ENCODE measurements at regions of chr12 and their contacts with region 1.

Region 1: GRCh38 chr12:22544038-22544979 is at the start of gene C2CD5:
- DNase-seq: peak; percentile 91
- ATAC-seq: peak; percentile 88
- H3K4me3 ChIP-seq: peak within 1 kb of the TSS; percentile 88
- H3K27ac ChIP-seq: peak within 1 kb of the TSS; percentile 80
- H3K4me1 ChIP-seq: peaks cover 9% of the 10 kb centered on the region; the same call in 1 of the 2 replicates
- H3K27me3 ChIP-seq: no peaks in the 10 kb centered on the region
- CTCF ChIP-seq: 0 out of 2 replicates have a peak, but pooled peaks have one; percentile 17
- total RNA-seq, gene C2CD5: 12.7 and 14.4 TPM in 2 replicates

Region 2: GRCh38 chr12:21710948-21711775 is 833.1 kb before region 1 on chr12:
- CTCF ChIA-PET with region 1: no interaction called
- POLR2A ChIA-PET with region 1: no interaction called
- intact Hi-C with region 1: no loop called
- DNase-seq: peak; percentile 19
- ATAC-seq: peak; percentile 68
- H3K4me3 ChIP-seq: no peak overlapping the region
- H3K27ac ChIP-seq: no peak overlapping the region
- H3K4me1 ChIP-seq: peaks cover 14% of the 10 kb centered on the region
- H3K27me3 ChIP-seq: no peaks in the 10 kb centered on the region
- CTCF ChIP-seq: no peak

Region 3: GRCh38 chr12:22431693-22432251 is 112.5 kb before region 1 on chr12:
- CTCF ChIA-PET with region 1: no interaction called
- POLR2A ChIA-PET with region 1: no interaction called
- intact Hi-C with region 1: no loop called
- DNase-seq: no peak
- ATAC-seq: no peak
- H3K4me3 ChIP-seq: no peak overlapping the region
- H3K27ac ChIP-seq: no peak overlapping the region
- H3K4me1 ChIP-seq: peaks cover 20% of the 10 kb centered on the region
- H3K27me3 ChIP-seq: no peaks in the 10 kb centered on the region
- CTCF ChIP-seq: no peak

Region 4: DNA sequence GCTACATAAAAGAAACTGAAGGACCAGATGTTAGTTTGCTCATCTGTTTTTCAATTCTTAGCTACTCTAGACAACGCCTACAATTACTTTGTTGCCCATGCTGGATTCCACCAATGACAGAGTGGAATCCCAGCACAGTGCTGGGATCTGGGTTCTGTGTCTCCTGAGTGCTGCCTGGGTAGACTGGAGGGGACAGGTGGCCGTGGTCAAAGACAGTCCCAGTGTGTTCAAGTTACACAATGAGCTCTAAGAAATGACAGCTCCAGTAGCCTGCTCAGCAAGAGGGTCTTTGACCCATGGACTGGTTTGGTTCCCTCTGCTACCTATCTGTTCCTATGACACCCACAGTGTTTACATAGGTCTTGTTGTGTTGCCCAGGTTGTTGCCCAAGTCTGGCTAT is 38.5 kb before region 1 on chr12:
- CTCF ChIA-PET with region 1: no interaction called
- POLR2A ChIA-PET with region 1: interaction called, 10 read pairs
- intact Hi-C with region 1: no loop called
- DNase-seq: no peak
- ATAC-seq: no peak
- H3K4me3 ChIP-seq: no peak overlapping the region
- H3K27ac ChIP-seq: no peak overlapping the region
- H3K4me1 ChIP-seq: no peaks in the 10 kb centered on the region
- H3K27me3 ChIP-seq: no peaks in the 10 kb centered on the region
- CTCF ChIP-seq: no peak

Region 5: GRCh38 chr12:22588817-22589216 is 44.5 kb after region 1 on chr12:
- CTCF ChIA-PET with region 1: no interaction called
- POLR2A ChIA-PET with region 1: no interaction called
- intact Hi-C with region 1: loop called (anchors 5 kb)
- DNase-seq: no peak
- ATAC-seq: no peak
- H3K4me3 ChIP-seq: no peak overlapping the region
- H3K27ac ChIP-seq: no peak overlapping the region
- H3K4me1 ChIP-seq: peaks cover 3% of the 10 kb centered on the region; the same call in 1 of the 2 replicates
- H3K27me3 ChIP-seq: no peaks in the 10 kb centered on the region
- CTCF ChIP-seq: no peak

Region 6: DNA sequence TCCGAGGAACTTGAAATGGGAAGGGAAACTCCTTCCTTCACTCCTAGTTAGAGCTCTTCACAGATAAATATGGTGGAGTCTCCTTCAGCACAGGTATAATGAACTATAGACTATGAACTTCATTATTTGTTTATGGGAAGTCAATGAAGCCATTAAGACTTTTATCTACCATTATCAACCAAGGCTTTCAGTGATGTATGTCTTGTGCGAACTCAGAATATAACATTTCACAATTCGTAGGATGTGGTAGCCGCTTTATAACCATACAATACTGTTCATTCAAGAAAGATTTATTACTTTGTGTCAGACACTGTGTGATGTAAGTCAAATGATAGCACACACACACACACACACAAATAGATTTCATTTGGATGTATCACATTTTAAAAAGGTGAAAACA is 55.9 kb after region 1 on chr12:
- CTCF ChIA-PET with region 1: no interaction called
- POLR2A ChIA-PET with region 1: no interaction called
- intact Hi-C with region 1: no loop called
- DNase-seq: no peak
- ATAC-seq: no peak
- H3K4me3 ChIP-seq: no peak overlapping the region
- H3K27ac ChIP-seq: no peak overlapping the region
- H3K4me1 ChIP-seq: no peaks in the 10 kb centered on the region
- H3K27me3 ChIP-seq: no peaks in the 10 kb centered on the region
- CTCF ChIP-seq: no peak